ENCODE measurements at regions of chr4 and their contacts with region 1.

Region 1: DNA sequence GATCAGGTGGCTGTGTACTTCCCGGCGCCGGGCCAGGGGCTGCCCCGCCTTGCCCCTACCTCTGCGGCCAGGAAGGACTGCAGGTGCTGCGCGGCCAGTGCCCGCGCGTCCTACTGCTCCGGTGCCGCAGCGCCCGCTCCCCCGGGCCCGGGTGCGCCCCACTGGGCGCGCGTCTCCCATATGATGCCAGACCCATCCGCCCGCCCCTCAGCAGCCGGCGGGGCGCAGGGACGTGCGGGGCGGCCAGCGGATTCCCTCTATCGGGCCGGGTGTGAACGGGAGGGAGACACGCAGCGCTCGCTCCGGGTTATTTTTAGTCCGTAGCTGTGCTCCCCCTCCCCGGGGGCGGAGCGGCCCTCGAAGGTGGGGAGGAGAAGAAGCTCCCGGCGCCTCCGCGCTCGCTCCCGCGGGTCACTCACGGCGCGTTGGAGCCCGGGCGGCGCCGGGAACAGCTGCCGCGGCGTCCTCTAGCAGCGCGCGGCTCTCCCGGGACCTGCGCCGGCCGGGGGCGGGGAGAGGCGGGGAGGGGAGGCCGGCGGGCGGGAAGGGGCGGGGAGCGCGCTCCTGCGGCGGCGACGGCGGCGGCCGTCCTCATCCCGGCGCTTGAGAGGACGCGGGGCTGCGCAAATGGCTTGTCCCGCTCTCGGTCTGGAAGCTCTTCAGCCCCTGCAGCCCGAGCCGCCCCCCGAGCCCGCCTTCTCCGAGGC is 103.6 kb downstream of the UCHL1 start:
- DNase-seq: peak; percentile 85

Region 2: GRCh38 chr4:41281038-41281634 is 79.2 kb before region 1 on chr4:
- intact Hi-C with region 1: loop called (anchors 5 kb)
- DNase-seq: no peak

Region 3: DNA sequence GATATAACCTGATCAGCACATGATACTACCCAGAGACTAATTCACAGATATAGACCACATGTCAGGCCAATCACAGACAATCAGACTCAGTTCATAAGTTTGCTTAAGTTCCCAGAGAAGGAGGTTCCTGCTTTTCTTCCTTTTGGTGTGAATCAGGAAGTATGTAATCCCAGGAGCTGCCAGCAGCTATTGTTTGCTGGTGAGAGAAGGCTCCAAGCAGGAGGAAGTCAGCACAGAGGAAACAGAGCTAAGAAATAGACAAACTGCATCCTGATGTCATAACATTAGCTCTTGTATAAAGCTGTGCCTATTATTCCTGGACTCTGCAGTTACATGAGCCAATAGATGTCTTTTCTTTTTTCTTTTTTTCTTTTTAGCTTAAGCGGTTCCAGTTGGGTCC is 52.7 kb before region 1 on chr4:
- intact Hi-C with region 1: no loop called
- DNase-seq: no peak

Region 4: DNA sequence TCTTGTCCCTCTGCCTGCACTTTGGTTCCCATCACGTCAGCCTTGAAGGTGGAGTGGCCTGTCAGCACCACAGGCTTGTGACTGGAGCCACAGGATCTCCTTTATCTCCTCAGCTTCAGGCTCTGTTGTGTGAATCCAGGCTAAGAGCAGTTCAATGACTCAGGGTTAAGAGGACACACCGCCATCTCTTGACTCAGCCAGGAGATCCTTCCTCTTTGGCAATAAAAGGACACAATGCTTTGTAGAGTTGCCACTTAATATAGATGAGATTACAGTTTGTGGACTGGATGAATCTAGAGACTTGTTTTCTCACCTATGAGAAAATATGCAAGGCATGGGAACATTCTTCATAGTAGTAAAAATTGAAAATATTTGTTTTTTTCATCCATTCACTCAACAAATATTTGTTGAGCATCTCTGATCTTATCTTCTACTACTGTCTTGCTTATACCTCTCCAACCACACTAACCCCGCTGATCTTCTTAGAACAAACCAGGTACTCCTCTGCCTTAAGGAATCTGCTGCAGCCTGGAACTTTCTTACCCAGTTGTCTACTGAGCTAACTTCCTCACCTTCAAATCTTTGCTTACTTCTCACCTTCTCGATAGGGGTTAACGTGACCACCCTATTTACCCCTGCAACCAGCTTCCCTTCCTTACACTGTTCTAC is 41.4 kb before region 1 on chr4:
- intact Hi-C with region 1: loop called (anchors 5 kb)
- DNase-seq: peak; percentile 83

Region 5: GRCh38 chr4:41437111-41437536 is 76.8 kb after region 1 on chr4:
- intact Hi-C with region 1: loop called (anchors 5 kb)
- DNase-seq: no peak

Region 6: GRCh38 chr4:41538017-41538733 is 177.8 kb after region 1 on chr4 and contains the start of gene LIMCH1:
- intact Hi-C with region 1: loop called (anchors 1 kb)
- DNase-seq: peak; percentile 86
- total RNA-seq, gene LIMCH1: 291 TPM

Region 7: GRCh38 chr4:41569961-41570360 is 209.6 kb after region 1 on chr4:
- intact Hi-C with region 1: no loop called
- DNase-seq: no peak

Region 8: DNA sequence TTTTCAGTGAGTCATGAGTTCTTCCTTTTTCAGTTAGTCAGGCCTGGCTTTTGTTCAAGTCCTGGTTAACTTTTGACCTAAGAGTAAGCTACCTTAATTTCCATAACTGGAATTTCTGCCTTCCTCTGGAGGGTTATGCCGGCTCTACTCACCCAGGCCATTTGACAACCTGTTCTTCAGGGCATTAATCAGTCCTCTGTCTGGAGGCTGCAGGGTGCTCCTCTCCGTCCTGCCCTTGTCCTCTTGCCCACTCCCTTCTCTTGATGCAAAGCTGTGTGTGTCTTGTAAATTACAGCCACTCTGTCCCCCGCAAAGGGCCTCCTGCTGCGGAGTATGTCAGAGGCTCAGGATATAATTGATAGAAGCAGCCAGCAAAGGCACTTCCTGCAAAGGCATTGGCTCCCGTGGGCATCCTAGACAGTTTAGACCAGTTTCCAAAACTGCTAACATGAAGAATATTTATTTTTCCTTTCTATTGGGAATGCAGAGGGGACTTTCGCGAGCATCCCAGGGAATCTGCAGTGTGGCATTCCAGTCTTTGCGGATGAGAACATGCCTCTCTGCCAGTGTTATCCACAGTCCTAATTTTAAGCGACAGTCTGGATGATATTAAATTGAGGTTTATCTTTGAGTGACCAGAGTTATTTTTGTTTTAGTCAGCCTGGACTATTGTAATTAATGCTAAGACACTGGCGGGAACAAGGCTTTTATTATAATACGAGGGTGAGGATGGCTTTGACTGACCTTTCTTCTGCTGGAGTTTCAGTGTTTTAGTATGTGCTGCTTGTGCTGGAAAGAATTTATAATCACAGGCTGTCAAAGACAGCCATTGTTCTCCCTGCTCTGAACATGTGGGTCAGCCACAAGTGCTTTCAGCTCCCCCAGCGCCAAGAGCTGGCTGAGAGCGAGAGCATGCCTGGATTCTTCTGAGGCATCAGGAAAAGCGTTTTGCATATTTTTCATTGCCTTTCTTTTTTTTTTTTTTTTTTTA is 251.8 kb after region 1 on chr4:
- intact Hi-C with region 1: loop called (anchors 2 kb)
- DNase-seq: no peak

Region 9: DNA sequence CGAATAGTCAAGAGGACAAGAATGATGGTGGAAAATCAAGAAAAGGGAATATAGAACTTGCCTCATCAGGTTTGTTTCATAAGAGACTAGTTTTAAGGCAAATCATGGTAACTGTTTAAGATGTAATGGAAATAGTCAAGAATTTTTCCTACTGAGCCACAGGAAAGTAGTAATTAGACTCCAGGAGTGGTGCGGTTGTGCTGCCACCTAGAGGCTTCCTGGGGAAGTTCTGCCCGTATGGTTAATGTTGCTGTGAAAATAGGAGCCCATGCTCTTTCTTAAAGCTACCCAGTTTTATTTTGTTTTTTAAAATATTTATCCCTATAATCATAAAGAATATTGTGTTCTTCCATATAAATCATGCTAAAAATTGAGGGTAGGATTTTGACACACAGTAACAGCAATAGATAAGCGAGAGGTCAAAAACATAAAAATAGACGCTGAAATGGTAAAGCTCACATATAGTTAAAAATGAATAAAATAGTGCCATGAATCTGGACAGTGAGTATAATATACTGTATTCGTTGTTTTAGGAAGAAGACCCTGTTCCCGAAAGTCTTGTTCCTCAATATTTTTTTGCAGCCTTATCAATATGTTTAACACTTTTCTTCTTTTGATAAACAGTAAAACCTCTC is 301.2 kb after region 1 on chr4:
- intact Hi-C with region 1: loop called (anchors 5 kb)
- DNase-seq: no peak

Region 10: GRCh38 chr4:41734366-41734765 is 374.0 kb after region 1 on chr4:
- intact Hi-C with region 1: no loop called
- DNase-seq: no peak